Pancreas (tissue), 10 donors: ENCODE measurements at regions of chr7 and their contacts with region 1.

Region 1: DNA sequence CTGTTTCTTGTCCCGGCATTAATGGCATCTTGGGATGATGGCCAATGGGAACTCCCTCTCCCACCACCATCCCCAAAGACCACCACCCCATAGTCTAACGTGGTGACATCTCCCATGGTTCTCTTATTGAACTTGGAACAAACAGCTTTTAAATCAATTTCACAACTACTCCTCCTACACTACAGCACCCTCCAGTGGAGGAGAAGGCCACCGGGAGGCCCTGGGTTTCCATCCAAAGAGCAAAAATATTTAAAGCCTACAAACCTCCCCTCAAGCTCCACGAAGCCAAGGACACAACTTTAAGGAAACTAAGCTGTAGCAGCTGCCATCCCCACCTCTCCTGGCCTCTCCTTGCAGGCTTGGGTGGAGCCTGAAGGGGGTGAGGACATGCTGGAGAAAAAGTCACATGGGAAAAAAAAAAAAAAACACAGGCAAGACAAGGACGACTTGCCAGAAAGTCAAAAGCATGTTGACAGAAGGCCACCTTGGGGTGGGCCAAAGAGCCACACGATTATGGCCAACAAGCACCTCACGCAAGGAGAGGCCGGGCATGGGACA is 94.0 kb upstream of the LANCL2 start:
- DNase-seq: no peak
- ATAC-seq: peak in 2 of 4 donors; percentile 12 to 42
- H3K4me3 ChIP-seq: no peak overlapping the region
- H3K27ac ChIP-seq: no peak overlapping the region
- H3K4me1 ChIP-seq: no peaks in the 10 kb centered on the region
- H3K27me3 ChIP-seq: no peaks in the 10 kb centered on the region
- CTCF ChIP-seq: no peak

Region 2: DNA sequence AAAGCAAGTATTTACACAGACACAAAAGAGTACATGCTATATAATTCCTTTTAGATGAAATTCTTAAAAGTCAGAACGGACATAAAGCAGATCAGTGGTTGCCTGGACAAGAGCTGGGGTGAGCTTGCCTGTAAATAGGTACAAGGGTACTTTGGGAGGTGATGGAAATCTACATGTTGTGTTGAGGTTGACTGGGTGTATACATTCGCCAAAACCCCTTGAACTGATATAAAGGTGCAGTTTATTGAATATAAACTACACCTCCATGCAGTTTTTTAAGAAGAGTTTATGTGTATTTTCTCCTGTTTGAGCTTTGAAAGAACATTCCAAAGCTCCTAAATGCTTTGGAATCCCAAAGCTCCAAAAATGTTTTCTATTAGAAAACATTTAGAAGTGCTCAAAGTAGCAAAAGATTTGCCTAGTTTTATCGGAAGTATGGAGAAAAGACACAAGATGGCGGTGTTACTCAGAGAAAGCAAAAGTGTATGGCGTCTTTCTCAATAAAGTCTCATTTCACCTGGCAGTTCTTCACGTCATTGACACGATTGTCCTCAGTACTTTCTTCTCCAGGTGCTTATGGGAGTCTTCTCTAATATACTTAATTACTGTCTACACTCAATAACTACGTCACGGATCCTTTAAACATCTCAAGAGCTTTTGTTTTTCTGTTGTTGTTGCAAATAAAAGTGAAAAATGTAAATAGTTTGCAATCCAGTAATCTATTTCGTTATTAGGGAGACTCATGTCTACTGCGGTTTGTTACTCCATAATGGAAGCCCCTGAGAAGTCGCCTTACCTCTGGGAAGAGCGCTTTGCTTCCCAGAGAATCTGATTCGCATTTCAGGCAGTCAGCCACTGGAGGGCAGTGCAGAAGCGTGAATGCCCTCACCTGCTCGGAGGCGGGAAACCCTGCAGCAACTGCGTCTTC is 497.4 kb before region 1 on chr7:
- intact Hi-C with region 1: loop called in 1 of 3 experiments (anchors 10 kb)
- DNase-seq: peak; percentile 77 to 91 (median 86)
- ATAC-seq: peak; percentile 98 to 100 (median 100)
- H3K4me3 ChIP-seq: peak overlapping the region in 3 of 4 donors; percentile 11 to 33 (median 31)
- H3K27ac ChIP-seq: peak overlapping the region in 2 of 4 donors; percentile 39 to 53
- H3K4me1 ChIP-seq: peaks cover 0 to 9% (median 0%) of the 10 kb centered on the region in 3 donors
- H3K27me3 ChIP-seq: no peaks in the 10 kb centered on the region
- CTCF ChIP-seq: peak; percentile 67 to 85 (median 74)

Region 3: GRCh38 chr7:55415173-55415778 is 144.1 kb after region 1 on chr7:
- intact Hi-C with region 1: loop called (anchors 5 to 10 kb)
- DNase-seq: peak; percentile 66 to 90 (median 79)
- ATAC-seq: peak; percentile 82 to 98 (median 96)
- H3K4me3 ChIP-seq: no peak overlapping the region
- H3K27ac ChIP-seq: no peak overlapping the region
- H3K4me1 ChIP-seq: no peaks in the 10 kb centered on the region
- H3K27me3 ChIP-seq: no peaks in the 10 kb centered on the region
- CTCF ChIP-seq: peak; percentile 52 to 81 (median 71)

Region 4: GRCh38 chr7:55469271-55469681 is 198.1 kb after region 1 on chr7:
- intact Hi-C with region 1: no loop called
- DNase-seq: no peak
- ATAC-seq: no peak
- H3K4me3 ChIP-seq: no peak overlapping the region
- H3K27ac ChIP-seq: no peak overlapping the region
- H3K4me1 ChIP-seq: no peaks in the 10 kb centered on the region
- H3K27me3 ChIP-seq: no peaks in the 10 kb centered on the region
- CTCF ChIP-seq: no peak

Region 5: DNA sequence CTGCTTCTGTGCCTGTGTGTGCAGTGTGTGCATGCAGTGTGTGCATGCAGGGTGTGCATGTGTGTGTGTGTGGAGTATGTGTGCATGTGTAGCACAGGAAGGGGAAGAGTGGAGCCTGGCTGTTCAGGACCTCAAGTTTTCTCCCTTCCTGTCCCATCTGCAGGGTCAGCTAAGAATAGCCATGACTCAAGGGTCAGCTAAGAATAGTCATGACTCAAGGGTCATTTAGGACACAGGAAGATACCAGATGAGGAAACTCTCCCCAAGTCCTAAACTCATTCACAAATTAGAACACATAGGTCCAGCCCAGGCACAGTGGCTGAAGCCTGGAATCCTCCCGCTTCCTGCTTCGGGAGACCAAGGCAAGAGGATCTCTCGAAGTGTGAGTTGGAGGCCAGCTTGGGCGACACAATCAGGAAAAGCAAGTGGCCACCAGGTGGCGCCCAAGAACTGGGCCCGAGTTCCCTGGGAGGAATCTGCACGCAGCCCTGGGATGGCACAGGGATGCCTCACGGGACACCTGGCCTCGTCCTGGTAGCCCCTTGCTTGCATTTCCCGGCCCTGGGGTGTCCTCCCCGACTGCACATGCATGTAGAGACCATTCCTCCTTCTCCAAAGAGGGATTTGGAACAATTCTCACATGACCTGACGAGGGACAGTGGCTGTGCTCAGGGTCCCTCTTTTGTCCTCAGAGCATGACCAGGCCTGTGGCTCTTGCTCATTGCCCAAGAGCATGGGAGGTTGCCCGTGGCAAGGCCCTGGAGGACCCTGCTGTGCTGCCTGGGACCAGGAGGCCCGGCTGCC is 322.6 kb after region 1 on chr7:
- intact Hi-C with region 1: loop called in 1 of 3 experiments (anchors 10 kb)
- DNase-seq: peak in 4 of 6 donors; percentile 55 to 90 (median 76)
- ATAC-seq: peak; percentile 52 to 72 (median 64)
- H3K4me3 ChIP-seq: no peak overlapping the region
- H3K27ac ChIP-seq: no peak overlapping the region
- H3K4me1 ChIP-seq: no peaks in the 10 kb centered on the region
- H3K27me3 ChIP-seq: no peaks in the 10 kb centered on the region
- CTCF ChIP-seq: peak; percentile 61 to 72 (median 67)

Region 6: GRCh38 chr7:55622241-55622640 is 351.1 kb after region 1 on chr7:
- intact Hi-C with region 1: no loop called
- DNase-seq: no peak
- ATAC-seq: no peak
- H3K4me3 ChIP-seq: no peak overlapping the region
- H3K27ac ChIP-seq: no peak overlapping the region
- H3K4me1 ChIP-seq: peaks cover 0 to 2% (median 0%) of the 10 kb centered on the region in 3 donors
- H3K27me3 ChIP-seq: no peaks in the 10 kb centered on the region
- CTCF ChIP-seq: no peak